ENCODE measurements at regions of chr13 and their contacts with region 1.

Region 1: DNA sequence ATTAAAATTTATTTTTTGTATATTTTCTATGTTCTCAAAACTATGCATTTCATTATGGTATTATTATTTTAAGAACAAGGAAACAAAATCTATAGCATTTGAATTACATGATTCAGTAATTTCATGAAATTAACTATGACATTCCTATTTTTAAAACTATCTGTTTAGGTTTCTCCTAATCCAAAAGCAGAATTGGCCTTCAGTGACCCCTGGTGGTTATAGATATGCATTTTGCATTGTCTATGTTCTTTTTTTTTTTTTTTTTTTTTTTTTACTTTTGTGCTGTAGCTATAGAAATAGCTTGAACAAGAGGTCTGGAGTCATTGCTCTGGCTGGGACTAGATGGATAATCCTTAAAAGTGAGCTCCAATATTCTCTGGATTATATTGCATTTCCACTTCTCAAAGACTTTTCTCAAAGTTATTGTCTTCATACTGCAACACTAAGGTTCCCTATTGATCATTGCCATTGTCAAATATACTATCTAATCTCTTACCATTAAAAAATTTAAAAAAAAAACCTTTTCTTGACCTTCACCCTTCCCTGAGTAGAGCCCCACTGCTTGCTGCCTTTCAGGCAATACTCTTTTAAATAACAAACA is 15.9 kb upstream of the DNAJC3 start:
- DNase-seq: no peak
- H3K4me3 ChIP-seq: no peak overlapping the region
- H3K27ac ChIP-seq: no peak overlapping the region
- H3K27me3 ChIP-seq: peaks cover 6% of the 10 kb centered on the region
- CTCF ChIP-seq: peak; percentile 67

Region 2: GRCh38 chr13:95355494-95355893 is 305.6 kb before region 1 on chr13:
- CTCF ChIA-PET with region 1: no interaction called
- POLR2A ChIA-PET with region 1: no interaction called
- DNase-seq: peak; percentile 20
- H3K4me3 ChIP-seq: no peak overlapping the region
- H3K27ac ChIP-seq: peak overlapping the region; percentile 22
- H3K27me3 ChIP-seq: no peaks in the 10 kb centered on the region
- CTCF ChIP-seq: no peak

Region 3: GRCh38 chr13:95536632-95537241 is 124.3 kb before region 1 on chr13:
- CTCF ChIA-PET with region 1: interaction called, 19 read pairs
- POLR2A ChIA-PET with region 1: no interaction called
- DNase-seq: no peak
- H3K4me3 ChIP-seq: no peak overlapping the region
- H3K27ac ChIP-seq: no peak overlapping the region
- H3K27me3 ChIP-seq: no peaks in the 10 kb centered on the region
- CTCF ChIP-seq: peak; percentile 49

Region 4: DNA sequence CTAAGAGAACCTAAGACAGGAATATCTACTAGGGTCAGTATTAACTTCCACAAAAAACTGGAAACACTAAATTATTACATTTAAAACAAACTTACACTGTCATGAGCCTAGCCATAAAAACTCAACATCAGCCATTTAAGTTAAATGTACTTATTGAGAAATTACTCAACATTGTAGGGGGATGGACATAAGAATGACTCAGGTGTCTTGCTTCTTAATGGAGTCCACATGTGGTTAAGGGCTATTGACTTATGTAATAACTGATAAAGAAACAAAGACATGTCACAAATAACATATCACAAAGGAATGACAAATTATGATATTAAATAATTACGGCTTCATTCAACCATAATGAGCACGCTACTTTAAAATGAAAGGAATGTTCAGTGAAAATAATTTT is 72.4 kb before region 1 on chr13:
- CTCF ChIA-PET with region 1: interaction called, 13 read pairs
- POLR2A ChIA-PET with region 1: no interaction called
- DNase-seq: no peak
- H3K4me3 ChIP-seq: no peak overlapping the region
- H3K27ac ChIP-seq: no peak overlapping the region
- H3K27me3 ChIP-seq: no peaks in the 10 kb centered on the region
- CTCF ChIP-seq: no peak

Region 5: DNA sequence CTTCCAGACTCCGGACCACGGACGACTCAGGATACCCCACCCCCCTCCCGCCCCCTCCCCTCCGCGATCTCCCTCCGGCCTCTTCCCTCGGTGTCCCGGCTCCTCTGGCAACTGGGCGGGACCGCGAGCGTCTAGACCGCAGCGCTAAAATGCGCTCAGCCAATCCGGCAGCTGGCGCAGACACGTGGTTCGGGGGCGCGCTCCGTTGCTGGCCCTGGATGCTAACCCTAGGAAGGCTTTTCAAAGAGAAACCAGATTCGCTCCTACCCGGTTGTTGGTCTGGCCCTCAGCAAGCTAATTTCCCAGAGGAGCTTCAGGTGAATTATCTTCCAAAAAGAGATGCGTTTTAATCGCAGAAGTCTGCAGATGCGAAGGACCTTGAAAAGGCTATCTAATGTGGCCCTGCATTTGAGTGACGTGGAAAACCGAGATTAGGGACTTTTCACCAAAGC is 16.5 kb before region 1 on chr13 and contains the start of gene DZIP1:
- CTCF ChIA-PET with region 1: interaction called, 16 read pairs
- POLR2A ChIA-PET with region 1: interaction called, 4 read pairs
- DNase-seq: peak; percentile 64
- H3K4me3 ChIP-seq: peak within 1 kb of the TSS; percentile 65
- H3K27ac ChIP-seq: peak within 1 kb of the TSS; percentile 65
- H3K27me3 ChIP-seq: no peaks in the 10 kb centered on the region
- CTCF ChIP-seq: no peak
- polyA plus RNA-seq, gene DZIP1: 30.5 and 32.9 TPM in 2 replicates

Region 6: DNA sequence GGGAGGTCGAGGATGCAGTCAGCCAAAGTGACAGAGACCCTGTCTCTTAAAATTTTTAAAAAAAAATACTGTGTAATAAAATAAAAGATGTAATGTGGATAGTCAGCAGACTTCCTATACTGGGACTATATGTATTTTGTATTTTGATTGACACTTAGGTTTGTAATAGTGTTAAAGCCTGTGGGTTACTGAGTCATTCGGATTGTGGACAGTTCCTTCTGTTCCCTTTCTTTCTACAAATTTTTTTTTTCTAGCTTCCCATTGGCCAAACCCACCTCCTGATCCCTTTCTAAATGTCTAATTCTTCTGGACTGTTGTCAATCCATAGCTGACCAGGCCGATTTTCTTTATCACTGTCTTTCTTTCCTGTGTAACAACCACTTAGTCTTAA is 123.8 kb after region 1 on chr13:
- CTCF ChIA-PET with region 1: interaction called, 12 read pairs
- POLR2A ChIA-PET with region 1: no interaction called
- DNase-seq: no peak
- H3K4me3 ChIP-seq: no peak overlapping the region
- H3K27ac ChIP-seq: peak overlapping the region; percentile 66
- H3K27me3 ChIP-seq: no peaks in the 10 kb centered on the region
- CTCF ChIP-seq: no peak

Region 7: DNA sequence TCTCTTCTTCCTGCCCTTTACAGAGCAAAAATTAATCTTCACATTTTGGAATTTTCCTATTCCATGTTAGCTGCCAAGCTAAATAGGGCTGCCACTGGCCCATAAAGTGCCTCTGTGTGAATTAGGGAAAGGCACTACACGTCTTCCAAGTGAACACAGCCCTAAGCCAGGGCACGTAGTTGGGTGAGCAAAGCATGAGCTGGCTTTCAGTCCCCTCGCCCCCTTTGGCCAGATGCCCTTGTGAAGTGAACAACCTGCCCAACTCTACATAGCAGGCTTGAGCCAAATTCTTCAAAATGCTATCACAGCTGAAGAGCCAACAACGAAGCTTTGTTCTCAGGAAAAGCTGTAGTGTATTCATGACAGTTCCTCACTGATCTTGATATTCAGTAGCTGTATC is 1120.1 kb after region 1 on chr13:
- CTCF ChIA-PET with region 1: no interaction called
- POLR2A ChIA-PET with region 1: no interaction called
- DNase-seq: no peak
- H3K4me3 ChIP-seq: no peak overlapping the region
- H3K27ac ChIP-seq: no peak overlapping the region
- H3K27me3 ChIP-seq: no peaks in the 10 kb centered on the region
- CTCF ChIP-seq: no peak